ENCODE measurements at regions of chr11 and their contacts with region 1.

Region 1: DNA sequence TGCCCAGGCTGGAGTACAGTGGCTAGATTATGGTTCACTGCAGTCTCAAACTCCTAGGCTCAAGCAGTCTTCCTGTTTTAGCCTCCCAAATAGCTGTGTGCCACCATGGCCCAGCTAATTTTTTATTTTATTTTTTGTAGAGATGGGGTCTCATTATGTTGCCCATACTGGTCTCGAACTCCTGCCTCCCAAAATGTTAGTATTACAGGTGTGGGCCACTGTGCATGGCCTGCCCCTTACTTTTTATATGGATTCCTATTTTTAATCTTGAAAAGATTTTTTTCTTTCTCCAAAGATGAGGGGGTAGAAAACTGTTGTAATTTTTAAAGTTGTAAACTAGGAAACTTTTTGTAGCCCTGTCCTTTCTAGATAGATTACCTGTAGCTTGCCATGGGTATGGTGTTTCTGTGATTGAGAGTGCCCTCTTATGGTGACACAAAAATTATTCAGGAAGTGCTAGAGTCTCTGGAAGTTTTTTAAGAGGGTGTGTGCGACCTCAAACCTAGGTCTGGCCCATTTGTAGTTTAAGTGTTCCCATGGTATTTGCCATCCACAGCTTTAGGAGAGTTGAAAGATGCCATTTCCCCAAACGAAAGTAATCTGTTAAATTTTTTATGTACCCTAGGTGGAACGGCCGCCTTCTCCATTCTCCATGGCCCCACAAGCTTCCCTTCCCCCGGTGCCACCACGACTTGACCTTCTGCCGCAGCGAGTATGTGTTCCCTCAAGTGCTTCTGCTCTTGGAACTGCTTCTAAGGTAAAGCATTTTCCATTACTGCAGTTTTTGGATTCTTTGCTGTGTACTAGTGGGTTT is 32.4 kb downstream of the MCAM start:
- DNase-seq: no peak
- ATAC-seq: peak; percentile 93
- H3K4me3 Mint-ChIP-seq: no peak overlapping the region
- H3K27ac Mint-ChIP-seq: peak overlapping the region; percentile 27
- H3K4me1 Mint-ChIP-seq: peaks cover 24% of the 10 kb centered on the region
- H3K27me3 Mint-ChIP-seq: no peaks in the 10 kb centered on the region

Region 2: DNA sequence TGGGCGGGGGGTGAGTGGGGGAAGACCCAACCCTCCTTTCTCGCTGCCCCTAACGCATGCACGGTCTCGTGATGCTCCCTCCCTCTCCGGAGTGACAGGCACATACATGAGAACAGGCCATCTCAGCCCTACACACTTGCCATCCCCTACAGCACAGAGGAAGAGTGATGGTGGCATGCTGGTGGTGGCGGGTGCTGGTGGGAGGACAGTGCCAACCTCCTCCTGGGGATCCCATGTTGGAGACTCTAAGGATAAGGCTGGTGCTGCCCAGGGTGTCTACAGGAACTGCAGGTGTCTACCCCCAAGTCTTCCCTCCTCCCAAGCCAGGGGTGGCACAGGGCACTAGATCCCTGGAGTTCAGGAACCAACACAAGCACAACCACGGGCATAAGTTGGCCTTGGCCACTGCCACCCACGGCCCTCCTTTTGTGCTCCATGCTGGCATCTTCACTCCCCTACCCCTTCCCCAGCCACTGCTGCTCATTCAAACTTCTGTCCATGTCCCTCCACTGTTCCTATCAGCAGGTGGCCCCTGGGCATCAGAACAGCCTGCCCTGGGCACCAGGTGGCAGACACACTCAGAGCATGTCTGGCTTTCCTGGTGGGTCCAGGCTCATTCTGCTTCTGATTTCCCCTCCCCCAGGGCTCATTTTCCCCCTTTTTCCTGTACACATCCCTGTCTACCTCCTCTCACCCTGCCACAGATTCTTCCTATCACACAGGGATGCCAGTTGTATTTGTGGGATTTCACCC is 122.5 kb before region 1 on chr11:
- CTCF ChIA-PET with region 1: no interaction called
- DNase-seq: no peak
- ATAC-seq: no peak
- H3K4me3 Mint-ChIP-seq: no peak overlapping the region
- H3K27ac Mint-ChIP-seq: no peak overlapping the region
- H3K4me1 Mint-ChIP-seq: peaks cover 2% of the 10 kb centered on the region
- H3K27me3 Mint-ChIP-seq: peaks cover 2% of the 10 kb centered on the region

Region 3: GRCh38 chr11:119196833-119197483 is 87.6 kb before region 1 on chr11:
- CTCF ChIA-PET with region 1: interaction called, 10 read pairs
- DNase-seq: peak; percentile 76
- ATAC-seq: peak; percentile 97
- H3K4me3 Mint-ChIP-seq: no peak overlapping the region
- H3K27ac Mint-ChIP-seq: no peak overlapping the region
- H3K4me1 Mint-ChIP-seq: peaks cover 4% of the 10 kb centered on the region
- H3K27me3 Mint-ChIP-seq: no peaks in the 10 kb centered on the region

Region 4: DNA sequence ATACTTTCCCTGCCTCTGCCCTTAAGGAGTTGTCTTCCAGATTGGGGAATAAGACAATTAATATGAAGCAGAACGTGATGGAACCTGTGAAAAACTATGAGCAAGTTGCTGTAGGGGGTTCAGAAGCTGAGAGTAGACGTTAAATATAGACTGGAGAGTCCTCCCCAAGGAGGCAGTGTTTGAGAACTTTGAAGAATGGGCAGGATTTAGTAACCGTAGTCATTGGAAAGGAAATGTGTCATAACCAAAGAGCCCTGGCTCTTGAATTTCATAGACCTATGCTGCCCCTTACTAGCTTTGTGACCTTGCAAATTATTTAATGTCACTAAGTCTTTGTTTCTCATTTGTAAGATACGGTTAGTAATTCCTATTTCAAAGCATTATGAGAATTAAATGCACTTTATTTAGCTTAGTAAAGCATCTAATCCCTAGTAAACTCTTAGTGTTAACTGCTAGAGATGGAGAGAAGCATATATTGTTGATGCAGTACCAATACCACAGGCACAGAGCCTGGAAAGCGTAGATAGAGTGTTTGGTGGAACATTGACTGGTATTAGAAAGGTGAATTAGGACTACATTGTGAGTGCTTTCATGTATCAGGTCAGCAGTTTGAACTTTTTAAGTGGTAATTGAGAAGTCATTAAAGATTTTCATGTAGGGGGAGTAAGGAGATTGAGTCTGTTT is 21.7 kb before region 1 on chr11:
- CTCF ChIA-PET with region 1: interaction called, 40 read pairs
- DNase-seq: peak; percentile 45
- ATAC-seq: peak; percentile 82
- H3K4me3 Mint-ChIP-seq: no peak overlapping the region
- H3K27ac Mint-ChIP-seq: no peak overlapping the region
- H3K4me1 Mint-ChIP-seq: peaks cover 57% of the 10 kb centered on the region
- H3K27me3 Mint-ChIP-seq: no peaks in the 10 kb centered on the region

Region 5: GRCh38 chr11:119273721-119274120 is 10.8 kb before region 1 on chr11:
- CTCF ChIA-PET with region 1: interaction called, 15 read pairs
- DNase-seq: no peak
- ATAC-seq: no peak
- H3K4me3 Mint-ChIP-seq: no peak overlapping the region
- H3K27ac Mint-ChIP-seq: no peak overlapping the region
- H3K4me1 Mint-ChIP-seq: no peaks in the 10 kb centered on the region
- H3K27me3 Mint-ChIP-seq: no peaks in the 10 kb centered on the region

Measured in activated CD8-positive, alpha-beta memory T cell treated with anti-CD3 and anti-CD28 coated beads, Interleukin-2, amount 10 ng/mL, durations not matched to agents 7 days and 5 days (primary cell).